ENCODE measurements at regions of chr12 and their contacts with region 1.

Region 1: DNA sequence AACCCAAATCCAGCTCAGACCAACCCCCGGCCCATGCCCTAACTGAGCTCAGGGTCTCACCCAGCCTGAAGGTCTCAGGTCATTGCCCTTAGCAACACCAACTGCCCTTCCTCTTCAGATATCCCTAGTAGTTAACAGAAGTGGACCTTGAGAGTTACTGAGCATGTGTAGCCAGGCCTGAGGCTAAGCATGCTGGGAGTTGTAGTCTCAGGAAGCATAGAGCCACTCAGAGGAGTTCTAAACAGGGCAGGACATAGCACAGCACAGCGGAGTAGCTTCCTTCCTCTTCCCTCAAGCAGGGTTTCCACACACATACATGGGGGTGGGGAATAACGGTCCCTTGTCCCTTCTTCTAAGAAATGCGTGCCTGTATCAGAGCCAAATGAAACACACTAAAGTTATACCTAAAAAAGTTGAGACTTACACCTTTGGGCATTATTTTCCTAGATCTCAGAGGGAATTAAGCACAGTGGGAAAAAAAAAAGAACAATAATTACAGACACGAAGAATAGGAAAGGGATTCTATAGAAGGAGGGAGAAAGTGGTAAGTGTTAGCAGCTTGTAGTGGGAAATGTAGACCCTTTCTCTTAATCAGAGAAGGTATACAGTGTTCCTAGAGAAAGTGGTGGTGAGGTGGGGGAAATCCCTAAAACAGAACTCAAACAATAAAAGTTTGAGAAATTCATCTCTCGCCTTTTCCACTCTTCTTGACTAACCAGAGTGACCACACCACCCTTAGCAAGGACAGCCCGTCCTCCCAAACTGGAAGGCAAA is 4.4 kb downstream of the KMT2D start:
- DNase-seq: peak; percentile 74

Region 2: GRCh38 chr12:48977315-48978281 is 78.6 kb before region 1 on chr12:
- CTCF ChIA-PET with region 1: no interaction called
- POLR2A ChIA-PET with region 1: no interaction called
- DNase-seq: peak; percentile 57

Region 3: DNA sequence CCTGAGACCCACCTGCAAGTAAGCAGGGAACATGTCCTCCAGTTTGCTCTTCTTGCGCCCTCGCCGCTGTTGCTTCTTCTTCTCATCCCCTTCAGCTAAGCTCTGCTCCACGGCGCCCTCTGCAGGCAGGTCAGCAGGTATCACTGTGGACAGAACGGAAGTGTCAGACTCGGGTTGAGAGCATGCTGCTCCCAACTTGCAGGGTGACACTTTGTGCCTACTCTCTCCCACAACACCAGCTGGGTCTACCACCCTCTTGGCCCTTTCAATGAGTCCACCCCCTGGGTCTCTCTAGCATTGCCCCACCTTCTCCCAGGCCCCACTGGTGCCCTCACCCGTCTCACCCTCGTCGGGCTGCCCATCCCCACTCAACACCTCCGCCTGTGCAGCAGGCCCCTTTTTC is 12.3 kb before region 1 on chr12:
- CTCF ChIA-PET with region 1: interaction called, 19 read pairs
- POLR2A ChIA-PET with region 1: no interaction called
- DNase-seq: peak; percentile 84

Measured in HEK293T (cell line).